ENCODE measurements at regions of chr7 and their contacts with region 1.

Region 1: GRCh38 chr7:17304926-17305325 is 6.5 kb downstream of the AHR start:
- DNase-seq: peak in 6 of 14 experiments; percentile 2 to 68 (median 56)
- ATAC-seq: peak; percentile 60
- H3K4me3 ChIP-seq: peak overlapping the region; percentile 15
- H3K4me3 Mint-ChIP-seq: peak overlapping the region; percentile 62
- H3K27ac ChIP-seq: no peak overlapping the region
- H3K27ac Mint-ChIP-seq: peak overlapping the region; percentile 70
- H3K4me1 ChIP-seq: peaks cover 19% of the 10 kb centered on the region
- H3K4me1 Mint-ChIP-seq: peaks cover 42% of the 10 kb centered on the region
- H3K27me3 ChIP-seq: no peaks in the 10 kb centered on the region
- H3K27me3 Mint-ChIP-seq: no peaks in the 10 kb centered on the region
- CTCF ChIP-seq: no peak

Region 2: DNA sequence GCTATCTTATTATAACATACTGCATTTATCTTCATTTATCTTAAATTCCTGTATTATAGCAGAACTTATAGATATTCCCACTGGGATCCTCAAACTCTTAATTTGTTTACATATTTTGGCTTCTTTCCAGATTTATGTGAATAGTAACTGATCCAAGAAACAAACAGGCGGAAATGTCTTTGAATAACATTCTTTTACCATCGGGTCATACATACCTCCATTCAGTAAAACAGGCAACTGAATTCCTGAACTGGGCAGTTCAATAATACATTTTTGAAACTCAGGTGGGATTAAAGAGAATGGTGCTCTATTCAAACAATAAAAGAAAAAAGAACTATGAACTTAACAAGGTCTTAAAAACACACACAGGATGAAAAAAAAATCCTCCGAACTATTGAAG is 1221.0 kb before region 1 on chr7:
- CTCF ChIA-PET with region 1: no interaction called
- POLR2A ChIA-PET with region 1: no interaction called
- intact Hi-C with region 1: no loop called
- DNase-seq: no peak
- ATAC-seq: no peak
- H3K4me3 ChIP-seq: no peak overlapping the region
- H3K4me3 Mint-ChIP-seq: no peak overlapping the region
- H3K27ac ChIP-seq: no peak overlapping the region
- H3K27ac Mint-ChIP-seq: no peak overlapping the region
- H3K4me1 ChIP-seq: no peaks in the 10 kb centered on the region
- H3K4me1 Mint-ChIP-seq: no peaks in the 10 kb centered on the region
- H3K27me3 ChIP-seq: no peaks in the 10 kb centered on the region
- H3K27me3 Mint-ChIP-seq: no peaks in the 10 kb centered on the region
- CTCF ChIP-seq: no peak

Region 3: GRCh38 chr7:16989811-16990413 is 315.0 kb before region 1 on chr7:
- CTCF ChIA-PET with region 1: no interaction called
- POLR2A ChIA-PET with region 1: no interaction called
- intact Hi-C with region 1: no loop called
- DNase-seq: no peak
- ATAC-seq: no peak
- H3K4me3 ChIP-seq: no peak overlapping the region
- H3K4me3 Mint-ChIP-seq: no peak overlapping the region
- H3K27ac ChIP-seq: no peak overlapping the region
- H3K27ac Mint-ChIP-seq: no peak overlapping the region
- H3K4me1 ChIP-seq: no peaks in the 10 kb centered on the region
- H3K4me1 Mint-ChIP-seq: no peaks in the 10 kb centered on the region
- H3K27me3 ChIP-seq: no peaks in the 10 kb centered on the region
- H3K27me3 Mint-ChIP-seq: no peaks in the 10 kb centered on the region
- CTCF ChIP-seq: no peak

Region 4: GRCh38 chr7:17144322-17144721 is 160.6 kb before region 1 on chr7:
- CTCF ChIA-PET with region 1: interaction called, 6 read pairs
- POLR2A ChIA-PET with region 1: interaction called, 4 read pairs
- intact Hi-C with region 1: loop called in 1 of 2 experiments (anchors 5 kb)
- DNase-seq: peak; percentile 3 to 78 (median 38)
- ATAC-seq: peak; percentile 78
- H3K4me3 ChIP-seq: peak overlapping the region; percentile 8
- H3K4me3 Mint-ChIP-seq: peak overlapping the region; percentile 60
- H3K27ac ChIP-seq: no peak overlapping the region
- H3K27ac Mint-ChIP-seq: peak overlapping the region; percentile 75
- H3K4me1 ChIP-seq: peaks cover 21% of the 10 kb centered on the region
- H3K4me1 Mint-ChIP-seq: peaks cover 49% of the 10 kb centered on the region
- H3K27me3 ChIP-seq: no peaks in the 10 kb centered on the region
- H3K27me3 Mint-ChIP-seq: no peaks in the 10 kb centered on the region
- CTCF ChIP-seq: no peak

Region 5: GRCh38 chr7:17355050-17355449 is 50.1 kb after region 1 on chr7:
- CTCF ChIA-PET with region 1: no interaction called
- POLR2A ChIA-PET with region 1: no interaction called
- intact Hi-C with region 1: no loop called
- DNase-seq: no peak
- ATAC-seq: no peak
- H3K4me3 ChIP-seq: no peak overlapping the region
- H3K4me3 Mint-ChIP-seq: no peak overlapping the region
- H3K27ac ChIP-seq: no peak overlapping the region
- H3K27ac Mint-ChIP-seq: no peak overlapping the region
- H3K4me1 ChIP-seq: no peaks in the 10 kb centered on the region
- H3K4me1 Mint-ChIP-seq: no peaks in the 10 kb centered on the region
- H3K27me3 ChIP-seq: no peaks in the 10 kb centered on the region
- H3K27me3 Mint-ChIP-seq: no peaks in the 10 kb centered on the region
- CTCF ChIP-seq: no peak